Gastrocnemius medialis (tissue), 4 donors: ENCODE measurements at regions of chr14 and their contacts with region 1.

Region 1: GRCh38 chr14:55085060-55085660 is 33.7 kb downstream of the MAPK1IP1L start:
- DNase-seq: no peak
- ATAC-seq: no peak
- H3K4me3 ChIP-seq: no peak overlapping the region
- H3K27ac ChIP-seq: no peak overlapping the region
- H3K4me1 ChIP-seq: no peaks in the 10 kb centered on the region
- H3K27me3 ChIP-seq: no peaks in the 10 kb centered on the region
- CTCF ChIP-seq: no peak
- POLR2A ChIP-seq: no peak

Region 2: GRCh38 chr14:55051426-55052268 is 33.5 kb before region 1 on chr14 and contains the start of gene MAPK1IP1L:
- in situ Hi-C with region 1: no loop called
- intact Hi-C with region 1: loop called (anchors 5 kb)
- DNase-seq: peak; percentile 76 to 86
- ATAC-seq: peak; percentile 93 to 94
- H3K4me3 ChIP-seq: peak within 1 kb of the TSS; percentile 92 to 97 (median 96)
- H3K27ac ChIP-seq: peak within 1 kb of the TSS; percentile 98 to 100 (median 99)
- H3K4me1 ChIP-seq: peaks cover 17 to 31% of the 10 kb centered on the region in 2 donors
- H3K27me3 ChIP-seq: no peaks in the 10 kb centered on the region
- CTCF ChIP-seq: peak; percentile 96 to 100 (median 100)
- POLR2A ChIP-seq: peak; percentile 93 to 96
- total RNA-seq, gene MAPK1IP1L: 49.9 to 91.4 (median 68.0) TPM

Region 3: DNA sequence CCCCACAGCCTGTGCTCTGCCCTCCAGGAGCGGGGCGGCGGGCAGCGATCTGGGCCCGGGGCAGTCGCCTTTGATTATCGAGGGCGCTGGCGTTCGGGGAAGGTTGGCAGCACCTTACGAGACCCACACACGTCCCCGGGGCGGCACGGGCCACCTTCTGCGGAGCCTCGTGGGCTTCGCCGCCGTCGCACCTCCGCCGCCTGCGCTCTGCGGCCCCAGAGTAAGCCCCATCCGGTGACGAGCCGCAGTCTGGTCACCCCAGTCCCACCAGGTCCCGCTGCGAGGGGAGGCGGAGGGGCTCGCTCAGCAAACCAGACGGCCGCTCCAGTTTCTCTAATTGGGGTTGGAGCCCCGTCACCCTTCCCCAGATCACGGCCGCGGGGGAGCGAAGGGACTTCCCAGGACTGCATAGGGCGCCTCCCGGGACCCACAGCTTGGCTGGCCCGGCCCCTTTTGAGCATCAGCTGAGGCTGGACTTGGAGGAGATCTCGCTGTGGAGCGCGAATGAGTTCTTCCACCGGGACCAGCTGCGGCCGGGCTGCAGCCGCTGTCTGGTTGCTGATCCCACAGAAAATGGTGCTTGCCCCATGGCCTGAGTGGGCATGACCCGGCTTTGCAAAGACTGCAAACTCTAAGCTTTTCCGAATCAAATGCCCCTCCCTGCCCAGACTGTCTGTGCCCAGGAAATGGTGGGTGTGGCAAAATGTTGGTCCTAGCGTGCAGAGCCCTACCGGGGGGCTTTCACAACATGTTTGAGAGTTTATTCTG is 44.5 kb after region 1 on chr14:
- in situ Hi-C with region 1: no loop called
- intact Hi-C with region 1: loop called (anchors 2 kb)
- DNase-seq: peak; percentile 33 to 44
- ATAC-seq: peak; percentile 56 to 59
- H3K4me3 ChIP-seq: peak overlapping the region; percentile 62 to 75 (median 69)
- H3K27ac ChIP-seq: peak overlapping the region; percentile 81 to 88 (median 86)
- H3K4me1 ChIP-seq: peaks cover 2 to 12% of the 10 kb centered on the region in 2 donors
- H3K27me3 ChIP-seq: peaks cover 0 to 6% (median 0%) of the 10 kb centered on the region in 3 donors
- CTCF ChIP-seq: no peak
- POLR2A ChIP-seq: no peak

Region 4: GRCh38 chr14:55160989-55161388 is 75.8 kb after region 1 on chr14:
- in situ Hi-C with region 1: loop called in 3 of 4 experiments (anchors 5 kb)
- intact Hi-C with region 1: loop called (anchors 2 kb)
- DNase-seq: no peak
- ATAC-seq: no peak
- H3K4me3 ChIP-seq: no peak overlapping the region
- H3K27ac ChIP-seq: no peak overlapping the region
- H3K4me1 ChIP-seq: no peaks in the 10 kb centered on the region
- H3K27me3 ChIP-seq: no peaks in the 10 kb centered on the region
- CTCF ChIP-seq: peak in 3 of 5 experiments; percentile 42 to 57 (median 56)
- POLR2A ChIP-seq: no peak